KBM-7 (cell line): ENCODE measurements at regions of chr1 and their contacts with region 1.

Region 1: DNA sequence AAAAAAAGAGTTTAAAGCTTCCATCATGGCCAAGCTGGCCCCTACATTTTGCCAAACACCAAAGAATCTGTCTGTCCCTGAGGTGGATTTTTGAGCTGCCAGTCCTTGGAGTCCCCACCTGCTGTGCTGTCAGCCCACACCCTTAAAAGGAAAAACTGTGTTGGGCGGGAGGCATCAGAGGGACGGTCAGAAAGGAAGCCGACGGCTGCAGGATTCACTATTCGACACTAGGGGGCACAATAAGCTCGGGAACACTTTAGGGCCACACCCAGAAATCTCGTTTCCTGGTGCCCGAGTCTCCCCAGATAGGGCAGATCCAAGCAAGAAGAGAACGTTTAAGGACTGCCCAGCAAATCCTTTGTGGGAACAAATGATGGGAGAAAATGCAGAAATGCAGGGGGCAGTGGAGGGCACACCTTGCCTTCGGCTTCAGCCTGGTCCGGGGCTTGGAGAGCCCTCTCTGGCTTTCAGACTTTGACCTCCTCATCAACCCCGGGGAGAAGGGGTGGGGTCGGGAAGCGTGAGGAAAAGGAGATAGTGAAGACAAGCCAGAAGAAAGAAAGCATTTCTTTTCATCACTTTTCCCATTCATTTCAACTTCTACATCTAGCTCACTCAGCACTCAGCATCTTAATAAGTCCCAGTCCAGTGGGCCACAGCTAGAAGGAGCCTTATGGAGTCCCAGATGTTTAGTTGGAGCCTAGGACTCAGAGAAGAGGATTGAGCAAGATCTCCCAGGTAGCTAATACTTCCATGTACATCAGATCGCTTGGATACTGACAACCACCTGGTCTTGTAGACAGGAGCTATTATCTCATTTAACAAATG is 5.0 kb upstream of the CTTNBP2NL start:
- DNase-seq: peak; percentile 97

Region 2: DNA sequence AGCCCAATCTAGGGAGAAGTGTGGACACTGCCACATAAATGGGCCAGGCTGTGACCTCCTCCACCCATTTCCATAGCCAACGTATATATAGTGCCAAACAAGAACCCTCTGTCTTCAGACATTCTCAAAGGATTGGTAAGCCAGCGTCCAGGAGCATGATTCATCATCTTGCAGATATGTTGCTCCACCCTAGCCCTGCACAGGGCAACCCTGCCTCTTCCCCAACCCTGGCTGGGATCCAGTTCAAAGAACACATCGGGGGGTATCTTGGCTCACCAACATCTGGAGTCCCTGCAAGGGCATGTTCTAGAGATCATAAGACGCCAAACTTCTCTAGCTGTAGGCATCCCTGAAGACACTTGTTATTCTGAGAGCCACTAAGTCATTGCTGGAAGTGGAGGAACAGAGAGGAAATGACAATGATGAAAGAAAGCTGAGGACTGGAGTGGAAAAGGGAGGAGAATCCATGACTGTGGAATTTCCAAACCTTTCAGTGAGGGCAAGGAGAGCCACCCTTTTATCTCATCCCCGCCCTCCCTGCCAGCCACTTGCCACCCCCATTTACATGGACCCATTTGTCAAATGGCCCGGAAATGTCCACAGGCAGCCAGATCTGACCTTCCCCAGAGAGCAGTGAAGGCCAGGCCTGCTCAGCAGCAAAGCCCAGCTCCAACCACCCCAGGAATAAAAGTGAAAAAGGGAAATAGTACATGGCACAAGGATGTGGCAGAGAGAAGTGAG is 139.1 kb before region 1 on chr1:
- in situ Hi-C with region 1: no loop called
- DNase-seq: no peak

Region 3: GRCh38 chr1:112619520-112620376 is 228.8 kb after region 1 on chr1 and contains the start of gene CAPZA1:
- in situ Hi-C with region 1: loop called (anchors 25 kb)
- DNase-seq: peak; percentile 93